ENCODE measurements at regions of chr20 and their contacts with region 1.

Region 1: DNA sequence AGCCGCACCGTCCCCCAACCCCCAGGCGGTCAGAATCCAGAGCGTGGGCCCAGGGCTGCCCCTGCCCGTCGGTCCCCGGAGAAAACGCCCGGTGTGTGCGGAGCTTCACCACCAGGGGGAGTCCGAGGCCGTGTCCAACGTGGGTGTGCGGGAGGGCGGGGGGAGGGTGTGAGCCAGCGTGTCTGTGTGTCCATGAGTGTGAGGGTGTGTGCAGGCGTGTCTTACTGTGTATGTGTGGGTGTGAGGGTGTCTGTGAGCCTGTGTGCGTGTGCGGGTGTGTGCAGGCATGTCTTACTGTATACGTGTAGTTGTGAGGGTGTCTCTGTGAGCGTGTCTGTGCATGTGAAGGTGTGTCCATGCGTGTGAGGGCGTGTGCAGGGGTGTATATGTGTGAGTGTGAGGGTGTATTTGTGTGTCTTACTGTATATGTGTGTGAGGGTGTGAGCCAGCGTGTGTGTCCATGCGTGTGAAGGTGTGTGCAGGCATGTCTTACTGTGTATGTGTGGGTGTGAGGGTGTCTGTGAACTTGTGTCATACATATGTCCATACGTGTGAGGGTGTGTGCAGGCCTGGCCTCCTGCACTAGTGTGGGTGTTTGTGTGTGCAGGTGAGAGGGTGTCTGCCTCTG is 24.6 kb upstream of the GATA5 start:
- DNase-seq: peak; percentile 84
- ATAC-seq: peak; percentile 52
- H3K4me3 Mint-ChIP-seq: no peak overlapping the region
- H3K27ac Mint-ChIP-seq: peak overlapping the region; percentile 62
- H3K4me1 Mint-ChIP-seq: peaks cover 24% of the 10 kb centered on the region
- H3K27me3 Mint-ChIP-seq: no peaks in the 10 kb centered on the region

Region 2: DNA sequence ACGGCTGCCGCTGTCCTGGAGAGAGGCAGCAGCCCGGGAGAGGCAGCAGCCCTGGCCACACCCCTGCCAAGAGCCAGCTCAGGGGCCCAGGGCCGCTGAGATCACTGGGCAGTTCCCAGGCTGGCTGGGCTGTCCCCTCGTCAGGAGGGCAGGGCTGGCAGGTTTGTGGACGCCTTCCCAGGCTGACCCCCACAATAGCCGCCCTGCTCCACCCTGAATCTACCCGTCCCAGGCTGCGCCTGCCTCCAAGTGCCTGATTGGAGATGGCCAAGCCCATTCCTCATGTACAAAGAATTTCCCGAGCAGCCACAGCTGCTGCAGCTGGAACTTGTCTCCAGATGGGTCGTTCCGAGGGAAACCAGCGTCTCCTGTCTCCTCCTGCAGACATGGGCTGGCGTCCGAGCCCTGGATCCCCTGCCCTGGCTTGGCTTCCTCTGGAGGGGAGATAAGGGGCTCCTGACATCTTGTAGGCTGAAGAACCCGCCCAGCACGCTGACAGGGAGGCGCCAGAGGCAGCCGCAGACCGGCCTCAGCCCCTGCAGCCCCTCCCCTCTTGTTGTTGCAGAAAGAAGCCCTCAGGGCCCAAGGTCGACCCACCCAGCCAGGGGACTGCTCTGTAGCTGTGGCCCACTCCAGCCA is 15.2 kb before region 1 on chr20:
- CTCF ChIA-PET with region 1: no interaction called
- DNase-seq: no peak
- ATAC-seq: no peak
- H3K4me3 Mint-ChIP-seq: no peak overlapping the region
- H3K27ac Mint-ChIP-seq: no peak overlapping the region
- H3K4me1 Mint-ChIP-seq: no peaks in the 10 kb centered on the region
- H3K27me3 Mint-ChIP-seq: peaks cover 60% of the 10 kb centered on the region

Region 3: DNA sequence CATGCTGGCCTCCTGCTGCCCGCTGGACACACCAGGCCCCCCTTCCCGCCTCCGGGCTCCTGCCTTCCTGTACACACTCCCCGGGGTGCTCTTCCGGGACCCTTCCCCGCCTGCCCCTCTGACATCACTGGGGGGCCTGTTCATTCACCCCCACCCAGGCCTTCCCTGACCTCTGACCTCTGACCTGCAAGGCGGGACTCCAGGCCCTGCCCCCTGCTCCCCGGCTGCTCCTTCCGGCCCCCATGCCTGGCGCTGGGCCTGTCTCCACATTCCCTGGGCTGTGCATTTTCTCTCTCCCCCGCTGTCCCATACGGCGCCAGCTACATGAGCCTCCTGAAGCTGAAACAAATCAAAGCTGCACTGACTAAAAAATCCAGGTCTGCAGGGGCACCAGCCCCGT is 47.0 kb after region 1 on chr20:
- CTCF ChIA-PET with region 1: no interaction called
- DNase-seq: no peak
- ATAC-seq: no peak
- H3K4me3 Mint-ChIP-seq: no peak overlapping the region
- H3K27ac Mint-ChIP-seq: no peak overlapping the region
- H3K4me1 Mint-ChIP-seq: no peaks in the 10 kb centered on the region
- H3K27me3 Mint-ChIP-seq: peaks cover 24% of the 10 kb centered on the region

Region 4: GRCh38 chr20:62603021-62603906 is 102.9 kb after region 1 on chr20:
- CTCF ChIA-PET with region 1: interaction called, 10 read pairs
- DNase-seq: peak; percentile 85
- ATAC-seq: peak; percentile 72
- H3K4me3 Mint-ChIP-seq: peak overlapping the region; percentile 42
- H3K27ac Mint-ChIP-seq: peak overlapping the region; percentile 82
- H3K4me1 Mint-ChIP-seq: peaks cover 55% of the 10 kb centered on the region
- H3K27me3 Mint-ChIP-seq: peaks cover 31% of the 10 kb centered on the region

Region 5: GRCh38 chr20:62611819-62612218 is 111.5 kb after region 1 on chr20:
- CTCF ChIA-PET with region 1: interaction called, 43 read pairs
- DNase-seq: no peak
- ATAC-seq: no peak
- H3K4me3 Mint-ChIP-seq: no peak overlapping the region
- H3K27ac Mint-ChIP-seq: no peak overlapping the region
- H3K4me1 Mint-ChIP-seq: peaks cover 4% of the 10 kb centered on the region
- H3K27me3 Mint-ChIP-seq: peaks cover 29% of the 10 kb centered on the region

Region 6: GRCh38 chr20:62623488-62624324 is 123.4 kb after region 1 on chr20:
- CTCF ChIA-PET with region 1: interaction called, 43 read pairs
- DNase-seq: peak; percentile 97
- ATAC-seq: peak; percentile 96
- H3K4me3 Mint-ChIP-seq: peak overlapping the region; percentile 53
- H3K27ac Mint-ChIP-seq: peak overlapping the region; percentile 96
- H3K4me1 Mint-ChIP-seq: peaks cover 43% of the 10 kb centered on the region
- H3K27me3 Mint-ChIP-seq: no peaks in the 10 kb centered on the region

Region 7: GRCh38 chr20:62642040-62642665 is 141.8 kb after region 1 on chr20 and contains the start of gene SLCO4A1:
- CTCF ChIA-PET with region 1: interaction called, 10 read pairs
- DNase-seq: peak; percentile 90
- ATAC-seq: peak; percentile 91
- H3K4me3 Mint-ChIP-seq: peak within 1 kb of the TSS; percentile 82
- H3K27ac Mint-ChIP-seq: peak within 1 kb of the TSS; percentile 81
- H3K4me1 Mint-ChIP-seq: peaks cover 39% of the 10 kb centered on the region
- H3K27me3 Mint-ChIP-seq: peaks cover 19% of the 10 kb centered on the region
- total RNA-seq, gene SLCO4A1: 74.7 to 79.2 TPM

Region 8: GRCh38 chr20:62808211-62808865 is 308.0 kb after region 1 on chr20:
- CTCF ChIA-PET with region 1: interaction called, 24 read pairs
- DNase-seq: peak; percentile 78
- ATAC-seq: peak; percentile 50
- H3K4me3 Mint-ChIP-seq: no peak overlapping the region
- H3K27ac Mint-ChIP-seq: peak overlapping the region; percentile 52
- H3K4me1 Mint-ChIP-seq: peaks cover 28% of the 10 kb centered on the region
- H3K27me3 Mint-ChIP-seq: no peaks in the 10 kb centered on the region

Measured in activated CD8-positive, alpha-beta memory T cell treated with anti-CD3 and anti-CD28 coated beads, Interleukin-2, amount 10 ng/mL, durations not matched to agents 7 days and 5 days (primary cell).